GM10248 (cell line): ENCODE measurements at regions of chr2 and their contacts with region 1.

Region 1: GRCh38 chr2:26577434-26578112 is 63.6 kb downstream of the CIB4 start:
- DNase-seq: peak; percentile 86
- CTCF ChIP-seq: peak; percentile 92

Region 2: GRCh38 chr2:26503231-26503880 is 74.2 kb before region 1 on chr2:
- CTCF ChIA-PET with region 1: interaction called, 23 read pairs
- POLR2A ChIA-PET with region 1: no interaction called
- DNase-seq: peak; percentile 92
- CTCF ChIP-seq: peak; percentile 80

Region 3: DNA sequence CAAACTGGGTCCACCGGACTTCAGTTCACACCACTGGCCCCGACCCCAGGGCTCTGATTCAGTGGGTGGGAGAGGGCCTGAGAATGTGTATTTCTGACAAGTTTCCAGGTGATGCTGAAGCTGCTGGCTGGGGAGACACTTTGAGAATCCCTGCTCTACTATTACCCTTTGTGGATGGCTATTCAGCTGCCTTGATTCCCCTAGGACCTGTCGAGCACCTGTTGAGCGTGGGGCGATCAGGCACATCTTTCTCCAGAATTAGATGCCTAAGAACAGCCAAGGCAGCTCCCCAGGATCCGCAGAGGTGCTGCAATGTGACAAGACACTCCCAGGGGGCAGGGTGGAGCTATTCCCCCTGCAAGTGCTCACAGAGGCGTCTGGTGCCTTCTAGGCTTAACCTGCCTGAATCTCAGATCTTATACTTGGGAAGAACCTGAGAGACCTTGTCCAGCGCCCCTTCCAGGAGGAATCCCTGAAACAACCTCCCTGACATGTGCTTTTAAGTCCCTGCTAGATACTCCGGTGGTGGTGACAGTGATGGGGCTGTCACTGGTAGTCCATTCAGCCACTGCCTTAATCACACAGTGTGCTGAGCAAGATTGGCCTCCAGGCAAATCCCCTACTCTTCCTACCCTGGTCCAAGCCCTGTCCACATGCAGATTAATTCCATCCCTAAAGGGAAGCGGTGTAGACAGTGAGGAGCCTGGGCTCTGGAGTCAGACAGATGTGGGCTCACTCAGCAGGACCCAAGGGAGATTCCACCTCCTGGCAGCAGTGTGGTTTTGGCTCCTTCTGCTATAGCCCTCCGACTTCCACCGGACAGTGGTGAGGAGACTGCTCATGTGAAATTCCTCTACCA is 56.3 kb before region 1 on chr2:
- CTCF ChIA-PET with region 1: interaction called, 19 read pairs
- POLR2A ChIA-PET with region 1: no interaction called
- DNase-seq: peak; percentile 48
- CTCF ChIP-seq: peak; percentile 24

Region 4: GRCh38 chr2:26598336-26598995 is 20.9 kb after region 1 on chr2:
- CTCF ChIA-PET with region 1: interaction called, 17 read pairs
- POLR2A ChIA-PET with region 1: no interaction called
- DNase-seq: no peak
- CTCF ChIP-seq: no peak